Naive thymus-derived CD8-positive, alpha-beta T cell (primary cell): ENCODE measurements at regions of chr6 and their contacts with region 1.

Region 1: DNA sequence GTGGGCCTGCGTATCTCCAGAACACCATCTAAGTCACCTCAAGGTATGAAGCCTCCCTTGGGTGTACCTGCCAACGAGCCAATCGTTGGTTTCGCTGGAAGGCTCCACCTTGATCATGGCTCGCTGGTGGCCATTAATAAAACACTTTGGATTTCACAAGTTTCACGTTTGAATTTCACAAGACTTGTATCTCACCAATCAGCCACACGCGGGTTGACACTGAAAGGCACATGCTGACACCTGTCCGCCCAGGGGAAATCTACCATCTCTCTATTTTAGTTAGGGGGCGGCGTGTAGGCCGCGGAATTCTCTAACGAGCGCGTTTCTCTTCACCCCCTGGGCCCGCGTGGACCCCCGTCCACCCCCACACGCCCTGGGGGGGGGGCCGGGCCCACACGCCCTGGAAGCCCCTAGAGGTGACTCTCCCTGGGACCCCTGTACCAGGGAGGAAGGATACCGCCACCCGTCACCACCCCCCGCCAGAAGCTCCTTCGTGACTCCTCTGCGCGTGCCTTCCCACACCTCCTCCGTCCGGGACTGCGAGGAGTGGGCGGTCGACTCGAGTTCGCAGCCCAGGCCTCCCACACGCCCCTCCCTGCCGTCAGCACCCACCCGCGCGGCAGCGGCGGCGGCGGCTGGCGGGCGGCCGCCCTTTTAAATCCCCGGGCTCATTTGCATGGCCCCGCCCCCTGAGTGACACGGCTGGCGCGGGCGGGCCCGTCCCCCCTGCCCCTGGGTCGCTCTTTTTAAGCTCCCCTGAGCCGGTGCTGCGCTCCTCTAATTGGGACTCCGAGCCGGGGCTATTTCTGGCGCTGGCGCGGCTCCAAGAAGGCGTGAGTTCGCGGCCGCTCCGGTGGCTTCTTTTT is at the start of gene HMGA1:
- DNase-seq: peak; percentile 78 to 94 (median 86)
- ATAC-seq: peak; percentile 68 to 75
- H3K4me3 Mint-ChIP-seq: peak within 1 kb of the TSS; percentile 88 to 97 (median 94)
- H3K27ac Mint-ChIP-seq: peak within 1 kb of the TSS; percentile 94 to 99 (median 98)
- H3K4me1 Mint-ChIP-seq: peaks cover 13 to 46% (median 37%) of the 10 kb centered on the region in 4 donors
- H3K27me3 Mint-ChIP-seq: no peaks in the 10 kb centered on the region
- polyA plus RNA-seq, gene HMGA1: 28.0 to 40.9 (median 38.1) TPM

Region 2: GRCh38 chr6:34223956-34224940 is 12.1 kb before region 1 on chr6:
- POLR2A ChIA-PET with region 1: interaction called, 99 read pairs
- DNase-seq: peak; percentile 81 to 98 (median 92)
- ATAC-seq: peak; percentile 95 to 97
- H3K4me3 Mint-ChIP-seq: peak overlapping the region; percentile 65 to 77 (median 69)
- H3K27ac Mint-ChIP-seq: peak overlapping the region; percentile 82 to 96 (median 92)
- H3K4me1 Mint-ChIP-seq: peaks cover 4 to 36% (median 15%) of the 10 kb centered on the region in 4 donors
- H3K27me3 Mint-ChIP-seq: no peaks in the 10 kb centered on the region

Region 3: GRCh38 chr6:34392497-34393190 is 156.3 kb after region 1 on chr6 and contains the start of gene NUDT3:
- POLR2A ChIA-PET with region 1: interaction called, 16 read pairs
- DNase-seq: peak; percentile 88 to 97 (median 94)
- ATAC-seq: peak; percentile 82 to 84
- H3K4me3 Mint-ChIP-seq: peak within 1 kb of the TSS in 9 of 10 donors; percentile 52 to 100 (median 84)
- H3K27ac Mint-ChIP-seq: peak within 1 kb of the TSS; percentile 87 to 98 (median 96)
- H3K4me1 Mint-ChIP-seq: peaks cover 8 to 29% (median 21%) of the 10 kb centered on the region in 4 donors
- H3K27me3 Mint-ChIP-seq: no peaks in the 10 kb centered on the region
- polyA plus RNA-seq, gene NUDT3: 7.4 to 10.8 (median 9.3) TPM